Endothelial cell of umbilical vein (primary cell): ENCODE measurements at regions of chr2 and their contacts with region 1.

Region 1: GRCh38 chr2:65420712-65421431 is 11.5 kb downstream of the SPRED2 start:
- DNase-seq: peak; percentile 82
- H3K4me3 ChIP-seq: no peak overlapping the region
- H3K27ac ChIP-seq: no peak overlapping the region
- H3K4me1 ChIP-seq: peaks cover 14% of the 10 kb centered on the region
- H3K27me3 ChIP-seq: peaks cover 54 to 63% of the 10 kb centered on the region in 2 experiments
- CTCF ChIP-seq: no peak
- POLR2A ChIP-seq: no peak

Region 2: GRCh38 chr2:65292461-65293011 is 128.3 kb before region 1 on chr2:
- CTCF ChIA-PET with region 1: no interaction called
- POLR2A ChIA-PET with region 1: no interaction called
- dilution Hi-C with region 1: no loop called
- intact Hi-C with region 1: no loop called
- DNase-seq: no peak
- H3K4me3 ChIP-seq: no peak overlapping the region
- H3K27ac ChIP-seq: no peak overlapping the region
- H3K4me1 ChIP-seq: no peaks in the 10 kb centered on the region
- H3K27me3 ChIP-seq: peaks cover 10 to 41% of the 10 kb centered on the region in 2 experiments
- CTCF ChIP-seq: no peak
- POLR2A ChIP-seq: no peak

Region 3: GRCh38 chr2:65382776-65383357 is 38.0 kb before region 1 on chr2:
- CTCF ChIA-PET with region 1: no interaction called
- POLR2A ChIA-PET with region 1: interaction called, 4 read pairs
- dilution Hi-C with region 1: no loop called
- intact Hi-C with region 1: loop called (anchors 1 kb)
- DNase-seq: no peak
- H3K4me3 ChIP-seq: no peak overlapping the region
- H3K27ac ChIP-seq: no peak overlapping the region
- H3K4me1 ChIP-seq: peaks cover 21% of the 10 kb centered on the region
- H3K27me3 ChIP-seq: peaks cover 59 to 60% of the 10 kb centered on the region in 2 experiments
- CTCF ChIP-seq: no peak
- POLR2A ChIP-seq: no peak